GM12878 (cell line): ENCODE measurements at regions of chr14 and their contacts with region 1.

Region 1: GRCh38 chr14:60254176-60254575 is 5.2 kb downstream of the PPM1A start:
- DNase-seq: no peak
- ATAC-seq: no peak
- H3K4me3 ChIP-seq: peak overlapping the region; percentile 24; the same call in 1 of the 2 replicates
- H3K27ac ChIP-seq: no peak overlapping the region
- H3K4me1 ChIP-seq: no peaks in the 10 kb centered on the region
- H3K27me3 ChIP-seq: no peaks in the 10 kb centered on the region
- CTCF ChIP-seq: no peak
- EP300 ChIP-seq: no peak
- POLR2A ChIP-seq: no peak
- RAD21 ChIP-seq: no peak

Region 2: GRCh38 chr14:60212503-60213371 is 41.4 kb before region 1 on chr14:
- CTCF ChIA-PET with region 1: interaction called, 42 read pairs
- POLR2A ChIA-PET with region 1: interaction called, 251 read pairs
- RAD21 ChIA-PET with region 1: interaction called, 446 read pairs
- SMC1A ChIA-PET with region 1: interaction called, 303 read pairs
- in situ Hi-C with region 1: no loop called
- intact Hi-C with region 1: no loop called
- DNase-seq: peak; percentile 98
- ATAC-seq: peak; percentile 89
- H3K4me3 ChIP-seq: no peak overlapping the region
- H3K27ac ChIP-seq: peak overlapping the region; percentile 93
- H3K4me1 ChIP-seq: peaks cover 39% of the 10 kb centered on the region
- H3K27me3 ChIP-seq: no peaks in the 10 kb centered on the region
- CTCF ChIP-seq: no peak
- EP300 ChIP-seq: peak; percentile 73 to 86
- POLR2A ChIP-seq: no peak; the same call in 1 of the 2 replicates
- RAD21 ChIP-seq: no peak

Region 3: GRCh38 chr14:60266021-60266937 is 12.1 kb after region 1 on chr14:
- CTCF ChIA-PET with region 1: interaction called, 14 read pairs
- POLR2A ChIA-PET with region 1: interaction called, 4 read pairs
- RAD21 ChIA-PET with region 1: interaction called, 11 read pairs
- SMC1A ChIA-PET with region 1: interaction called, 47 read pairs
- in situ Hi-C with region 1: no loop called
- intact Hi-C with region 1: no loop called
- DNase-seq: no peak
- ATAC-seq: peak; percentile 46; the same call in 2 of the 3 replicates
- H3K4me3 ChIP-seq: no peak overlapping the region
- H3K27ac ChIP-seq: no peak overlapping the region
- H3K4me1 ChIP-seq: no peaks in the 10 kb centered on the region
- H3K27me3 ChIP-seq: no peaks in the 10 kb centered on the region
- CTCF ChIP-seq: peak; percentile 1 to 22 (median 14); a peak in 1 of 6 replicates
- EP300 ChIP-seq: no peak
- POLR2A ChIP-seq: no peak
- RAD21 ChIP-seq: no peak